Activated naive CD4-positive, alpha-beta T cell treated with anti-CD3 and anti-CD28 coated beads for 36 hours (primary cell): ENCODE measurements at regions of chr11 and their contacts with region 1.

Region 1: GRCh38 chr11:58562375-58562800 is 13.3 kb downstream of the LPXN start:
- DNase-seq: peak; percentile 7
- H3K4me3 Mint-ChIP-seq: no peak overlapping the region
- H3K27ac Mint-ChIP-seq: peak overlapping the region; percentile 84
- H3K4me1 Mint-ChIP-seq: peaks cover 43% of the 10 kb centered on the region
- H3K27me3 Mint-ChIP-seq: no peaks in the 10 kb centered on the region

Region 2: DNA sequence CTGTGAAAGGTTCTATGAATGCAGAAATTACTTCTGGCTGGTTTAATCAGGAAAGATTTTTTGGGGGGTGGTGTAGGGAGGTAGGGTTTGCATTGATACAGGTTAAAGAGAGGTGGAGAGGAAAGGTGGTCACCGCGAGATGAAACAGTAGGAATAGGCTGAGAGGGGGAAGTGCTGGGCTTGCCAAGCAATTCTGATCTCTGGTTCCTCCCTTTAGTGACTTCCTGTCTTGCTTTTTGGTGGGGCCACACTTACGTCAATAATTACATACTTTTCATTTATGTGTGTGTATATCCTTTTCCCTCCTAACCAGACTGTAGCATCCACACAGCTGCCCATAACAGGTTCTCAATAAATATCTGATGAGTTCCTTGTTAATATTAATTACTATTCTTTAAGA is 680.7 kb before region 1 on chr11:
- CTCF ChIA-PET with region 1: no interaction called
- intact Hi-C with region 1: no loop called
- DNase-seq: no peak
- H3K4me3 Mint-ChIP-seq: no peak overlapping the region
- H3K27ac Mint-ChIP-seq: no peak overlapping the region
- H3K4me1 Mint-ChIP-seq: peaks cover 3% of the 10 kb centered on the region
- H3K27me3 Mint-ChIP-seq: peaks cover 3% of the 10 kb centered on the region

Region 3: GRCh38 chr11:58573451-58574104 is 11.2 kb after region 1 on chr11:
- CTCF ChIA-PET with region 1: interaction called, 23 read pairs
- intact Hi-C with region 1: loop called (anchors 1 kb)
- DNase-seq: peak; percentile 87
- H3K4me3 Mint-ChIP-seq: peak overlapping the region; percentile 100
- H3K27ac Mint-ChIP-seq: peak overlapping the region; percentile 99
- H3K4me1 Mint-ChIP-seq: peaks cover 54% of the 10 kb centered on the region
- H3K27me3 Mint-ChIP-seq: no peaks in the 10 kb centered on the region

Region 4: GRCh38 chr11:59336176-59336575 is 773.8 kb after region 1 on chr11:
- CTCF ChIA-PET with region 1: no interaction called
- intact Hi-C with region 1: no loop called
- DNase-seq: no peak
- H3K4me3 Mint-ChIP-seq: no peak overlapping the region
- H3K27ac Mint-ChIP-seq: no peak overlapping the region
- H3K4me1 Mint-ChIP-seq: no peaks in the 10 kb centered on the region
- H3K27me3 Mint-ChIP-seq: peaks cover 17% of the 10 kb centered on the region